Gastrocnemius medialis (tissue), 4 donors: ENCODE measurements at regions of chr13 and their contacts with region 1.

Region 1: DNA sequence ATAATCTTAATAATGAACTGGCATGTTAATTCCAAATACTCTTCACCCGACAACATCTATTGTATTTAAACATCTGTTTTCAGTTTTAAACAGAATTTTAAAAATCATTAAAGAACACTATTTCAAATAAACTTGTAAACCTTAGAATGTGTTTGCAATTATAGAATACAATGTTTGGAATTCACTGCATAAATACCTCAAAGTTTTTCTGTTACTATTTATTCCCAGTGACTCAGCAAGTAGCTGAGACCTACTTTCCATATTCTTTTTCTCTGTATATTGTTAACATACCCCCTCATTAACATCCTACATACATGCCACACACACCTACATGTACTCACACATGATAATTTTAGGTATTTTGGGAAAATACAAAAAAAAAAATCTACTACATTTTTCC is 1134.3 kb downstream of the SLITRK1 start:
- DNase-seq: no peak
- ATAC-seq: no peak
- H3K4me3 ChIP-seq: no peak overlapping the region
- H3K27ac ChIP-seq: no peak overlapping the region
- H3K4me1 ChIP-seq: no peaks in the 10 kb centered on the region
- H3K27me3 ChIP-seq: no peaks in the 10 kb centered on the region
- CTCF ChIP-seq: no peak
- POLR2A ChIP-seq: no peak

Region 2: GRCh38 chr13:82688400-82688994 is 59.5 kb before region 1 on chr13:
- in situ Hi-C with region 1: no loop called
- intact Hi-C with region 1: no loop called
- DNase-seq: no peak
- ATAC-seq: no peak
- H3K4me3 ChIP-seq: peak overlapping the region in 3 of 4 donors; percentile 7 to 22 (median 12)
- H3K27ac ChIP-seq: no peak overlapping the region
- H3K4me1 ChIP-seq: no peaks in the 10 kb centered on the region
- H3K27me3 ChIP-seq: no peaks in the 10 kb centered on the region
- CTCF ChIP-seq: no peak
- POLR2A ChIP-seq: no peak

Region 3: DNA sequence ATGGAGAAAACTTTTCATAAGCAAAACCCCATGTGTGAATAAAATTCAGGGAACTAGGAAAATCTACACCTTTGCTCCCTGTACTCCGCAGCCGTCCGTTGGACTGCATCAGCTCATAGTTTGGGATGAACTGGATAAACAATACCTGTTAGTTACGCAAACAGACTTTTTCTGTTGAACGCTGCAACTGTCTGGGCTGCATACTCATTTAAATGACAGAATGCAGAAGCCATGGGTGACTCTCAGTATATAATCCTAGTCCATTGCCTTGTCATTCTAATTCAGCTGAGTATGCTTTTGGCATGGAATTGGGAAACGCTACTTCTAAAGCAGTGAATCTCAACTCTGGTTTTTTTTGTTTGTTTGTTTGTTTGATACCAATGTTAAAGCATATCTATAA is 982.7 kb after region 1 on chr13:
- in situ Hi-C with region 1: no loop called
- intact Hi-C with region 1: loop called (anchors 5 kb)
- DNase-seq: no peak
- ATAC-seq: no peak
- H3K4me3 ChIP-seq: no peak overlapping the region
- H3K27ac ChIP-seq: no peak overlapping the region
- H3K4me1 ChIP-seq: no peaks in the 10 kb centered on the region
- H3K27me3 ChIP-seq: no peaks in the 10 kb centered on the region
- CTCF ChIP-seq: no peak
- POLR2A ChIP-seq: no peak